MCF 10A (cell line): ENCODE measurements at regions of chr5 and their contacts with region 1.

Region 1: GRCh38 chr5:141564216-141564692 is 54.5 kb downstream of the DIAPH1 start:
- DNase-seq: peak; percentile 98
- H3K4me3 Mint-ChIP-seq: no peak overlapping the region
- H3K27ac Mint-ChIP-seq: peak overlapping the region; percentile 98
- H3K4me1 Mint-ChIP-seq: peaks cover 39% of the 10 kb centered on the region
- H3K27me3 Mint-ChIP-seq: no peaks in the 10 kb centered on the region
- CTCF ChIP-seq: peak; percentile 92

Region 2: DNA sequence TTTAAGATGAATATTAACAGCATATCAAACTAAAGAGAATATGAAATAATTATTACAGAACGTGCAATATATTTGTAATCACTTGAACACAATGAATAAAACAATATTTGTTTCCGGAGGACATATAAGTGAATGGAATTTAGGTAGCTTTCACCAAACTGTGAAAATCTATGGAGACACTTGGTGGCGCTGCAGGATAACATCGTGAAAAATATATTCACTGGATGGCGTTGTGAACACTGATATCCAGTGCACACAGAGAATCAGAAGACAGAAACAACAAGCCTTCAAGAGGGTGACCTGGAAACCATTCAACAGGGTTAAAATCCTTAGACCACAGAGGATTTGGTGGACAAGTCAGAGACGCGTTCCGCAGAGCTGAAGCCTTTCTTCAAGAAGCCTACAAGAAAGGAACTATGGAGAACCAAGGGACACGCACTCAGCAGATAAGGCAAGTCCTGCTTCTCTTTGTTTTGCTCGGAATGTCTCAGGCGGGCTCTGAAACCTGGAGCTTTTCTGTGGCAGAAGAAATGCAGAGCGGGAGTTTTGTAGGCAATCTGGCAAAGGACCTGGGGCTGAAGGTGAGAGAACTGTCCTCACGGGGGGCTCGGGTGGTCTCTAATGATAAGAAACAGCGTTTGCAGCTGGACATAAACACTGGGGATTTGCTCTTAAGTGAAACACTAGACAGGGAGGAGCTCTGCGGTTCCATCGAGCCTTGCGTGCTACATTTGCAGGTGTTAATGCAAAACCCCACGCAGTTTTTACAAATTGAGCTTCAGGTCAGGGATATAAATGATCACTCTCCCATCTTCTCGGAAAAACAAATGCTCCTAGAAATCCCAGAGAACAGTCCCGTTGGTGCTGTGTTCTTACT is 364.7 kb before region 1 on chr5 and contains the start of gene PCDHB11:
- CTCF ChIA-PET with region 1: interaction called, 36 read pairs
- POLR2A ChIA-PET with region 1: interaction called, 26 read pairs
- intact Hi-C with region 1: no loop called
- DNase-seq: peak; percentile 32
- H3K4me3 Mint-ChIP-seq: peak within 1 kb of the TSS; percentile 61
- H3K27ac Mint-ChIP-seq: no peak within 1 kb of the TSS
- H3K4me1 Mint-ChIP-seq: no peaks in the 10 kb centered on the region
- H3K27me3 Mint-ChIP-seq: no peaks in the 10 kb centered on the region
- CTCF ChIP-seq: peak; percentile 40
- total RNA-seq, gene PCDHB11: 0.75 and 1.3 TPM in 2 replicates

Region 3: DNA sequence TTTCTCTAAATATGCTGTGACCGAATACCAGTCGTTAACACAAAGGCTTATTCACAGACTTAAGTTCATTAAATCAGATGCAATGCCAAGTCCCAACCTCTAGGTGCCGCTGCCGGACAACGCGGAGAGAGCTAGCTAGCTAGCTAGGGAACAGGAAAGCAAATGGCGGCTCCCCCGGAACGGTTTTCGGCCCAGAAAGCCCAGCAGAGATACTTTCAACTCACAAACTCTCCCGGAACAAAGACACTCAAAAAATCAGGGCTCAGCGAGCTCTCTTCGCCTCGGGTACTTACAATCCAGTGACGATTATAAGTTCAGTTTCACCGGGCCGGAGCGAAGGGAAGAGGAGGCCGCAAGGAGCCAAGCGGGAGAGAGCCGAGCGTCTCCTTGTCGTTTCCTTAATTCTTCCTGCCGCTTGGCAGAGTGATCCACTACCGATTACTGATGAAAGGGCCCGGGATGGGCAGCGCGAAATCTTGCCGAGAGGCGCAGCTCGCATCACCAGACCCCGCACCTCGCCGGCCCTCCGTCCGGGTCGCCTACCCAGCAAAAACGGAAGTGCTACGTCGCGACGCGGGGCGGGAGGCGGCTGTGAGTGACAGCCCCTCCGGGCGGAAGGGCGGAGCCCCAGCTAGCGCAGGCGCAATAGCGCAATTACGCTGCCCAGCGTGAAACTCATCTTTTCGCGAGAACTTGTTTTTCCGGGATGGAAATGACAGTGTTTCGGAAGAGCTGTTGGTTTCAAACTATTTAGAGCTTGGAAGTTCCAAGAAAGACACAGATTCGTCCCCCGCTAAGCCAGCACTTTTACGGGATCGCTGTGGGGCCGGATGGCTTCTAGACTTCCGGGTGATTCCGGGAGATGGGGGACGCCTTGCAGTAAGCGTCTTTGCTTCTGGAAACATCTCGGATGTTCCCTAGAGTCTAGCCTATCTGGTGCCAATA is 243.8 kb before region 1 on chr5 and contains the start of gene TAF7:
- CTCF ChIA-PET with region 1: interaction called, 51 read pairs
- POLR2A ChIA-PET with region 1: interaction called, 60 read pairs
- intact Hi-C with region 1: loop called (anchors 1 kb)
- DNase-seq: peak; percentile 95
- H3K4me3 Mint-ChIP-seq: peak within 1 kb of the TSS; percentile 99
- H3K27ac Mint-ChIP-seq: peak within 1 kb of the TSS; percentile 100
- H3K4me1 Mint-ChIP-seq: peaks cover 14% of the 10 kb centered on the region
- H3K27me3 Mint-ChIP-seq: no peaks in the 10 kb centered on the region
- CTCF ChIP-seq: peak; percentile 90
- total RNA-seq, gene TAF7: 81.3 and 94.9 TPM in 2 replicates

Region 4: GRCh38 chr5:141402553-141403260 is 161.5 kb before region 1 on chr5 and contains the start of gene PCDHGA9:
- CTCF ChIA-PET with region 1: interaction called, 21 read pairs
- POLR2A ChIA-PET with region 1: interaction called, 6 read pairs
- intact Hi-C with region 1: no loop called
- DNase-seq: peak; percentile 43
- H3K4me3 Mint-ChIP-seq: no peak within 1 kb of the TSS
- H3K27ac Mint-ChIP-seq: no peak within 1 kb of the TSS
- H3K4me1 Mint-ChIP-seq: no peaks in the 10 kb centered on the region
- H3K27me3 Mint-ChIP-seq: no peaks in the 10 kb centered on the region
- CTCF ChIP-seq: no peak
- total RNA-seq, gene PCDHGA9: 0.89 and 1.3 TPM in 2 replicates

Region 5: GRCh38 chr5:141512390-141512910 is 51.8 kb before region 1 on chr5:
- CTCF ChIA-PET with region 1: interaction called, 33 read pairs
- POLR2A ChIA-PET with region 1: interaction called, 5 read pairs
- intact Hi-C with region 1: no loop called
- DNase-seq: peak; percentile 81
- H3K4me3 Mint-ChIP-seq: no peak overlapping the region
- H3K27ac Mint-ChIP-seq: peak overlapping the region; percentile 81
- H3K4me1 Mint-ChIP-seq: peaks cover 58% of the 10 kb centered on the region
- H3K27me3 Mint-ChIP-seq: no peaks in the 10 kb centered on the region
- CTCF ChIP-seq: peak; percentile 98

Region 6: DNA sequence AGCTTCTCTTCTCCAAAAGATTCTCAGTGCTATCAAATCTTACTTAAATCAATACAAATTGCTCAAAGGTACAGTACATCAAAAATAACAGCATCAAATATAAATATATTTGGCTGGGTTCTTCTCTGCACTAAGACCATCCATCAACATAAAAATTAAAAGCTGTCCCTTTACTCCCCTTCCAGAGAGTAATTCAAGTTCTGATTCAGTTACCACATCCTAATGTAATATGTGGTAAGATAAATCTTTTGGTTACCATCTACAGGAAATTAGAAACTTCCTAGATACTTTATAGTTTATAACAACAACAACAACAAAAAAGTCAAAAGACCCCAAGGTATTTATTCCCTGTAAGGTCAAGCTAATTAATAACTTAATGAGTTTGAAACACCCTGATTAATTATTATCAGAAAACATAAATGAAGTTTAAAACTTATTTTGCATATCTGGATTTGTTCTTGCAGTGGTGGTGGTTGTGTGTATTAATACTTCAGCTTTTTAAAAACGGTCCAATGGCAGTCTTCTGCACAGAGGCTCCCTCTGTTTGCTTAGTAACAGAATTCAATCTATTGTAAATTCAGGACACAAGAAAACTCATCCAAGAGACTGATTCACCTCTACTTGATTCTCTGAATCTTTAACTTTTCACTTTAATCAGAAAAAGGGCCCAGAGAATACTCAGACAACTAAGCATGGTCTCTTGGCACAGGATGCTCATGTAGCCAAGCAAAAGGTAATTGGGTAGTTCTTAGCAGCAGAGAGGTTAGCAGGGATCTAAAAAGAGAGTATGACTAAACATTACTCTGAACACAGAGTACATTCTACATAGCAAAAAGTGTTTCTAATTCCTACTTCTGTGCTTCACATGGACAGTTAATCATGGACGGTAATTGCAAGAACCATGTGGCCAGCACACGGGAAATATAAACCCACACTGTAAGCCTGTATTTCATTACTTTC is 34.4 kb after region 1 on chr5:
- CTCF ChIA-PET with region 1: interaction called, 22 read pairs
- POLR2A ChIA-PET with region 1: interaction called, 4 read pairs
- intact Hi-C with region 1: no loop called
- DNase-seq: no peak
- H3K4me3 Mint-ChIP-seq: no peak overlapping the region
- H3K27ac Mint-ChIP-seq: peak overlapping the region; percentile 6
- H3K4me1 Mint-ChIP-seq: peaks cover 20% of the 10 kb centered on the region
- H3K27me3 Mint-ChIP-seq: no peaks in the 10 kb centered on the region
- CTCF ChIP-seq: no peak